ENCODE measurements at regions of chr9 and their contacts with region 1.

Region 1: GRCh38 chr9:135085830-135086546 is 1.5 kb upstream of the OLFM1 start:
- DNase-seq: peak; percentile 73 to 80
- ATAC-seq: peak; percentile 65 to 91 (median 76)
- H3K4me3 ChIP-seq: peak overlapping the region in 9 of 10 donors; percentile 28 to 53 (median 41)
- H3K27ac ChIP-seq: peak overlapping the region in 3 of 10 donors; percentile 35 to 61 (median 60)
- H3K4me1 ChIP-seq: peaks cover 8 to 39% (median 33%) of the 10 kb centered on the region in 9 donors
- H3K27me3 ChIP-seq: peaks cover 15 to 58% (median 34%) of the 10 kb centered on the region in 7 donors
- CTCF ChIP-seq: peak; percentile 88 to 99 (median 97)

Region 2: DNA sequence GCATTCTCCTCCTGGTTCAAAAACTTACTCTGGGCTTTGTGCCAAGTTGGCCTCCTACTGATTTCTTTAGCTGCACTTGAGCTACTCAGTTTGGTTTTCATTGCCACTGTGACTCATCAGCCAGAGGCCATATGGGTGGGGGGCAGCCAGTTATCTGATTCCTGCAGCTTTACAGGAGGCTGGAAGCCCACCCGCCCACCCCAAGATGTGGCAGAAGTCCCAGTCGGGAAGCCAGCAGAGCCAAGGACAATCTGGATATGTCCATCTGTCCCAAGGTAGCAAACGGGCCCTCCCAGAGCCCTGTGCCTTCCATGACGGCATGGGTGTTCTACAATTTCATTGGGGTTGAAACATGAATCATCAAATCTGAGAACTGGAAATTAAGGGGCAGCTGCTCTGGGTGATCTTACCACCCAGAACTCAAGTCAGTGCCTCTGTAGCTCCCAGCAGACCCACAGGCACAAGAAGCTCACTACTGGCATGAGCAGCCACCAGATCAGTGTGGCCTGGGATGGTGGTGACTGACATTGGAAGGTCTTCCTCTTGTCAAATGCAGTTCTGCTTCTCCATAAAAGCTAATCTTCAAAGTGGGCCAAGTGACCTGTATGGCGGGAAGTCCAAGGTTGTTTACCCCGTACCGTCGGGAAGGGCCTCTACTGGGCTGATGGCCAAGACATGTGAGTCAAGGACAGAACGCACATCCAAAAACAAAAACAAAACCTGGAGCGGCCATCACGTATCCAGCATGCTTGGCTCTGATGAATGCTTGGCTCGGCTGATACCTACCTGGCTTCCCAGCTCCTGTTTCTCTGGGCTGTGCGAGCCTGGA is 189.8 kb before region 1 on chr9:
- intact Hi-C with region 1: loop called in 2 of 10 experiments (anchors 5 to 10 kb)
- DNase-seq: peak; percentile 52 to 76
- ATAC-seq: peak; percentile 76 to 90 (median 87)
- H3K4me3 ChIP-seq: no peak overlapping the region
- H3K27ac ChIP-seq: peak overlapping the region; percentile 44 to 85 (median 80)
- H3K4me1 ChIP-seq: peaks cover 8 to 45% (median 34%) of the 10 kb centered on the region in 9 donors
- H3K27me3 ChIP-seq: no peaks in the 10 kb centered on the region
- CTCF ChIP-seq: no peak

Region 3: DNA sequence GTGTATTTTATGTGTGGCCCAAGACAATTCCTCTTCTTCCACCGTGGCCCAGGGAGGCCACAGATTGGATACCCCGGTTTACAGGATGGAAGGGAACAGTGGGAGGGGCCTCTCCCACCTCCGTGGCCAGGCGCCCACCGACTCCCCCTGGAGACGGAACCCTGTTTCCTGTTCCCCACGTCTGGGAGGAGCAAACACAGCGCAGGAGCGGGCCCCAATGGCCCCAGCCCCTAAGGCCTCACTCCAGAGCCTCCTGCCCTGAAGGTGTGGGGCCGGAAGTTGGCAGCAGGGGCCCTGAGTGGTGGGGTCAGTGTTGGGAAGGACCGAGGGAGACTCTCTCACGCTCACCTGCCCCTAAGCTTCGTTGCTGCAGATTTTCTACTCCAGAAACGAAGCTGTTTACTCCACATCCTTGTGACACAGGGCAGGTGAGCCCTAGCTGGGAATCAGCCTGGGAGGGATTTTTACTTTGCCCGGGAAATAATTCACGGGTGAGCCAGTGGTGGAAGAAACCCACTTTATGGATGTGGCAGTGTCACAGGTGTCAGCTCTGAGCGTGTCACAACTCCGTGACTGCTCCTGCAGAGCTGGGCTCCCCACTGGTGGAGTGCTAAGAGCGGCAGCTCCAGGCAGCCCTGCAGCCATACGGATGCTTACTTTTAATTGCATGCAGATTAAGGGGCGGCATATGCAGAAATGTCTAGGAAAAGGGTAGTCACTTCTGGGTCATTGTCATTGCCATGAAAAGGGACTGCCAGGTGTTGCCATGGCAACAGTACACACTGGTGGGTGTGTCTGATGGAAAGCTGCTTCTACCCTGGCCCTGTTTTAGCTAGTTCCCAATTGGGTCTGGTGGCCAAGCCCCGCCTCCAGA is 76.0 kb before region 1 on chr9:
- intact Hi-C with region 1: no loop called
- DNase-seq: no peak
- ATAC-seq: no peak
- H3K4me3 ChIP-seq: no peak overlapping the region
- H3K27ac ChIP-seq: no peak overlapping the region
- H3K4me1 ChIP-seq: no peaks in the 10 kb centered on the region
- H3K27me3 ChIP-seq: peaks cover 0 to 25% (median 7%) of the 10 kb centered on the region in 7 donors
- CTCF ChIP-seq: no peak

Region 4: GRCh38 chr9:135343837-135344522 is 258.0 kb after region 1 on chr9:
- intact Hi-C with region 1: loop called (anchors 1 to 2 kb)
- DNase-seq: peak; percentile 63 to 80
- ATAC-seq: peak; percentile 56 to 88 (median 72)
- H3K4me3 ChIP-seq: no peak overlapping the region
- H3K27ac ChIP-seq: no peak overlapping the region
- H3K4me1 ChIP-seq: peaks cover 0 to 10% (median 0%) of the 10 kb centered on the region in 9 donors
- H3K27me3 ChIP-seq: peaks cover 11 to 97% (median 59%) of the 10 kb centered on the region in 7 donors
- CTCF ChIP-seq: peak; percentile 75 to 97 (median 94)

Region 5: GRCh38 chr9:135410831-135411473 is 325.0 kb after region 1 on chr9:
- intact Hi-C with region 1: loop called (anchors 1 to 2 kb)
- DNase-seq: no peak
- ATAC-seq: no peak
- H3K4me3 ChIP-seq: no peak overlapping the region
- H3K27ac ChIP-seq: no peak overlapping the region
- H3K4me1 ChIP-seq: peaks cover 0 to 5% (median 0%) of the 10 kb centered on the region in 9 donors
- H3K27me3 ChIP-seq: peaks cover 3 to 57% (median 44%) of the 10 kb centered on the region in 7 donors
- CTCF ChIP-seq: no peak

Measured in heart right ventricle (tissue), 16 donors.